ENCODE measurements at regions of chr7 and their contacts with region 1.

Region 1: GRCh38 chr7:32579776-32580175 is 84.5 kb downstream of the AVL9 start:
- DNase-seq: no peak
- ATAC-seq: no peak
- H3K4me3 ChIP-seq: no peak overlapping the region
- H3K27ac ChIP-seq: no peak overlapping the region
- H3K4me1 ChIP-seq: no peaks in the 10 kb centered on the region
- H3K27me3 ChIP-seq: no peaks in the 10 kb centered on the region
- CTCF ChIP-seq: no peak
- EP300 ChIP-seq: no peak
- POLR2A ChIP-seq: no peak
- RAD21 ChIP-seq: no peak

Region 2: GRCh38 chr7:32490127-32490822 is 89.5 kb before region 1 on chr7 and contains the start of gene LSM5:
- CTCF ChIA-PET with region 1: no interaction called
- POLR2A ChIA-PET with region 1: no interaction called
- RAD21 ChIA-PET with region 1: no interaction called
- SMC1A ChIA-PET with region 1: interaction called, 3 read pairs
- in situ Hi-C with region 1: no loop called
- intact Hi-C with region 1: loop called (anchors 5 kb)
- DNase-seq: peak; percentile 80
- ATAC-seq: peak; percentile 85
- H3K4me3 ChIP-seq: peak within 1 kb of the TSS; percentile 84
- H3K27ac ChIP-seq: peak within 1 kb of the TSS; percentile 85
- H3K4me1 ChIP-seq: no peaks in the 10 kb centered on the region
- H3K27me3 ChIP-seq: no peaks in the 10 kb centered on the region
- CTCF ChIP-seq: no peak
- EP300 ChIP-seq: no peak; a peak in 1 of 4 replicates
- POLR2A ChIP-seq: peak; percentile 93
- RAD21 ChIP-seq: no peak
- polyA plus RNA-seq, gene LSM5: 494 to 538 TPM